GM12878 (cell line): ENCODE measurements at regions of chr6 and their contacts with region 1.

Region 1: DNA sequence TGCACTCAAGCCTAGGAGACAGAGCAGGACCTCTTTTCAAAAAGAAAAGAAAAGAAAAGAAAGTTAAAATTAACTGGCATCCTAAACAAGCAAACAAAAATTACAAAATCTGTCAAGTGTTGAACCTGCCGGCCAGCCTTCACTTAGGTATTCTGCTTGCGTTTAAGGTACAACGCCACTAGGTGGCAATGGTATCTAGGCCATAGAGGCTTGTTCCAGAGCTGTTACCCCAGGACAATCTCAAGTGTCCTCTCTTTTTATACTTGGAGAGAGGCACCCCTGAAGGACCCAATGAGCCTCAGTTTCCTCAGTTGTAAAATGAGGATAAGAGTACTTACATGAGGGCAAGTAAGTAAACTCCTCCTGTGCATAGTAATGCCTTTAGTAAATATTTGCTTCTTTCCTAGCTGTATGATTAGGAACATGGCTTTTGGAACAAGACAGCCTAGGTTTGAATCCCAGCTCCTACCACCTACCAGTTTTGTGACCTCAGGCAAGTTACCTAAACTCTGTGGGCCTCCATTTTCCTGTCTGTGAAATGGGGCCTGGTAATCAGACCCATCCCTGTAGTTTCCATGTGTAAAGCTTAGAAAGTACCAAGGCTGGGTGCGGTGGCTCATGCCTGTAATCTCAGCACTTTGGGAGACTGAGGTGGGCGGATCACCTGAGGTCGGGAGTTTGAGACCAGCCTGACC is 5.8 kb upstream of the PACSIN1 start:
- DNase-seq: peak; percentile 24
- ATAC-seq: peak; percentile 87
- H3K4me3 ChIP-seq: no peak overlapping the region
- H3K27ac ChIP-seq: no peak overlapping the region
- H3K4me1 ChIP-seq: no peaks in the 10 kb centered on the region; the same call in 1 of the 2 replicates
- H3K27me3 ChIP-seq: no peaks in the 10 kb centered on the region
- CTCF ChIP-seq: peak; percentile 69 to 83 (median 77)
- EP300 ChIP-seq: no peak
- POLR2A ChIP-seq: no peak
- RAD21 ChIP-seq: peak; percentile 95

Region 2: DNA sequence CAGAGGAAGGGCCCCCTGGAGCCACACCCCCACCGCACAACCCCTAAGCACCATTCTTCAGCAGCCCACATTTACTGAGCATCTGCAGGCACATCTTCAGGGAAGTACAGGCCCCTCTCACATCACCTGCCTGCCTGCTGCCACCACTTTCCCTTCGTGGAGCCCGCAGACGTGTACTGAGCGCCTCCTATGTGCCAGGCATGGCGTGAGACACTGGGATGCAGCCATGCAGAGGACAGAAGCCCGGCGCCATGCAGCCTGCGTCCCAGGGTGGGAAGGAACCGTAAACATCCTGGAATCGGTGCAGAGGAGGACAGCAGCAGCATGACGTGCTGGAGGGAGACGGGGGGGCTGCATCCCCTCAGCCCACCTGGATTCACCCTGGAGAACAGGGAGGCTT is 392.2 kb before region 1 on chr6:
- CTCF ChIA-PET with region 1: no interaction called
- POLR2A ChIA-PET with region 1: no interaction called
- RAD21 ChIA-PET with region 1: no interaction called
- SMC1A ChIA-PET with region 1: no interaction called
- in situ Hi-C with region 1: no loop called
- intact Hi-C with region 1: no loop called
- DNase-seq: no peak
- ATAC-seq: peak; percentile 61
- H3K4me3 ChIP-seq: no peak overlapping the region
- H3K27ac ChIP-seq: no peak overlapping the region
- H3K4me1 ChIP-seq: no peaks in the 10 kb centered on the region
- H3K27me3 ChIP-seq: peaks cover 0 to 3% of the 10 kb centered on the region in 2 experiments; a peak in 1 of 4 replicates
- CTCF ChIP-seq: peak; percentile 26 to 45 (median 36); a peak in 4 of 6 replicates
- EP300 ChIP-seq: no peak
- POLR2A ChIP-seq: no peak
- RAD21 ChIP-seq: peak; percentile 51

Region 3: DNA sequence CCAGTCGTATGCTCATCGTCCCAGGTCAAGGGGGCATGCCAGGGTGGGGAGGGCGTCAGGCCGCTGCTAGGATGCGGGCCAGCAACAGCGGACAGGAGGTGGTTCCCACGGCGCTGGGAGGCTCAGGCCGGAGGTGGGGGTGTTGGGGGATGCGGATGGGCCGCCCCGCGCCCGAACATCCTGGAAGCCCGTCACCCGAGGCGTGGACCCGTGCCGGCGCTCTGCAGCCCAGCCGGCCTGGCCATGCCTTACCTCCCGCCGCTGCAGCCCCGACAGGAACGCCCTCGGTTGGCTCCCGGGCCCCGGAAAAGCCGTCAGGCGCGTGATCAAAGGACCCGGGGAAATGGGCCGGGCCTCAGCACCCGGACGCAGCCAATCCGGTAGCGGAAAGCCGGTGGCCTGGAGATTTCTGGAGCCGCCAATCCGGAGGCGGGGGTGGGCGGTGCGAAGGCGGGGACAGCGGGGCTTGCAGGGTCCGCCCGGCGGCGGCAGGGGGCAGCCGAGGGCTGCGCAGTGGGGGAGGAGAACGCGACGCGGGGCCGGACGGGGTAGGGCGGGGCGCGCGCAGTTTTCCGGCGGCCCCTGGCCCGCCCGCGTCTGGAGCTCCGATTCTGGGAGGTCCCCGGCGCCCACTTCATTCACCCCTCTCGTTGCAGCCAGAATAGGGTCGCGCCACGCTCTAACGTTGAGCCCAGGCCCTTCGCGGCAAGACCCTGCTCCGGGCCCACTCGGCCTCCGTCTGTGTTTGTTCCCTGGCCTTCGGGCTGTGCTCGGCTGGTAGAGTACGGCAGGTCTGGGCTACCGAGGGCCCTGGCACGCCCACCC is 211.1 kb before region 1 on chr6 and contains the start of gene SMIM29:
- CTCF ChIA-PET with region 1: interaction called, 22 read pairs
- POLR2A ChIA-PET with region 1: interaction called, 3 read pairs
- RAD21 ChIA-PET with region 1: interaction called, 10 read pairs
- SMC1A ChIA-PET with region 1: interaction called, 6 read pairs
- in situ Hi-C with region 1: no loop called
- intact Hi-C with region 1: no loop called
- DNase-seq: peak; percentile 62
- ATAC-seq: peak; percentile 88
- H3K4me3 ChIP-seq: peak within 1 kb of the TSS; percentile 84
- H3K27ac ChIP-seq: peak within 1 kb of the TSS; percentile 78
- H3K4me1 ChIP-seq: peaks cover 19% of the 10 kb centered on the region
- H3K27me3 ChIP-seq: no peaks in the 10 kb centered on the region
- CTCF ChIP-seq: peak; percentile 82 to 86 (median 86)
- EP300 ChIP-seq: no peak
- POLR2A ChIP-seq: peak; percentile 91
- RAD21 ChIP-seq: peak; percentile 81
- polyA plus RNA-seq, gene SMIM29: 7.1 to 8.4 TPM

Region 4: GRCh38 chr6:34295721-34296120 is 164.3 kb before region 1 on chr6:
- CTCF ChIA-PET with region 1: no interaction called
- POLR2A ChIA-PET with region 1: no interaction called
- RAD21 ChIA-PET with region 1: no interaction called
- SMC1A ChIA-PET with region 1: no interaction called
- in situ Hi-C with region 1: no loop called
- intact Hi-C with region 1: no loop called
- DNase-seq: peak; percentile 95
- ATAC-seq: peak; percentile 95
- H3K4me3 ChIP-seq: 0 out of 2 replicates have a peak overlapping the region, but pooled peaks have one; percentile 4
- H3K27ac ChIP-seq: peak overlapping the region; percentile 76
- H3K4me1 ChIP-seq: peaks cover 40% of the 10 kb centered on the region
- H3K27me3 ChIP-seq: no peaks in the 10 kb centered on the region
- CTCF ChIP-seq: no peak
- EP300 ChIP-seq: no peak
- POLR2A ChIP-seq: no peak
- RAD21 ChIP-seq: no peak

Region 5: DNA sequence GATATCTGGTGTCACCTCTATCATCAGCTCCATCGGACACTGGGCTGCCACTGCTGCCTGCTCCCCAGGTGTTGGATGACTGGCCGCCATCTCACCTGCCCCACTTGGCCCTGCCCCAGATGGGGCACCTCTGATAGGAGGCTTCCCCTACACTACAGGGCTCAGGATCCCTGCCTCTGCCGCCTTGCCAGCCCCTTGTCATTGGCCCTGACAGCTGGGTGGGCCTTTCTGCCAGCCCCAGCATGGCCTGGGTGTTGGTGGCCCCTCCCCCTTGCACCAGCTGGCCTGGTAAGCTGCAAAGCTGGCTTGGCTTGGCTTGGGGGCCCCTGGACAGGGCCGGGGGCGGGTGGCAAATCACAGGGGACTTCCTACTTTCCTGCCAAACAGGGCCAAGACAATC is 16.4 kb after region 1 on chr6:
- CTCF ChIA-PET with region 1: interaction called, 9 read pairs
- POLR2A ChIA-PET with region 1: interaction called, 7 read pairs
- RAD21 ChIA-PET with region 1: interaction called, 11 read pairs
- SMC1A ChIA-PET with region 1: interaction called, 11 read pairs
- in situ Hi-C with region 1: no loop called
- intact Hi-C with region 1: no loop called
- DNase-seq: no peak
- ATAC-seq: no peak; the same call in 2 of the 3 replicates
- H3K4me3 ChIP-seq: no peak overlapping the region
- H3K27ac ChIP-seq: no peak overlapping the region
- H3K4me1 ChIP-seq: no peaks in the 10 kb centered on the region
- H3K27me3 ChIP-seq: no peaks in the 10 kb centered on the region
- CTCF ChIP-seq: no peak
- EP300 ChIP-seq: no peak
- POLR2A ChIP-seq: no peak
- RAD21 ChIP-seq: no peak

Region 6: GRCh38 chr6:34595332-34596184 is 135.5 kb after region 1 on chr6:
- CTCF ChIA-PET with region 1: interaction called, 11 read pairs
- POLR2A ChIA-PET with region 1: no interaction called
- RAD21 ChIA-PET with region 1: interaction called, 9 read pairs
- SMC1A ChIA-PET with region 1: interaction called, 20 read pairs
- in situ Hi-C with region 1: no loop called
- intact Hi-C with region 1: no loop called
- DNase-seq: no peak
- ATAC-seq: no peak
- H3K4me3 ChIP-seq: no peak overlapping the region
- H3K27ac ChIP-seq: no peak overlapping the region
- H3K4me1 ChIP-seq: peaks cover 5% of the 10 kb centered on the region
- H3K27me3 ChIP-seq: no peaks in the 10 kb centered on the region
- CTCF ChIP-seq: no peak
- EP300 ChIP-seq: no peak
- POLR2A ChIP-seq: no peak
- RAD21 ChIP-seq: no peak

Region 7: DNA sequence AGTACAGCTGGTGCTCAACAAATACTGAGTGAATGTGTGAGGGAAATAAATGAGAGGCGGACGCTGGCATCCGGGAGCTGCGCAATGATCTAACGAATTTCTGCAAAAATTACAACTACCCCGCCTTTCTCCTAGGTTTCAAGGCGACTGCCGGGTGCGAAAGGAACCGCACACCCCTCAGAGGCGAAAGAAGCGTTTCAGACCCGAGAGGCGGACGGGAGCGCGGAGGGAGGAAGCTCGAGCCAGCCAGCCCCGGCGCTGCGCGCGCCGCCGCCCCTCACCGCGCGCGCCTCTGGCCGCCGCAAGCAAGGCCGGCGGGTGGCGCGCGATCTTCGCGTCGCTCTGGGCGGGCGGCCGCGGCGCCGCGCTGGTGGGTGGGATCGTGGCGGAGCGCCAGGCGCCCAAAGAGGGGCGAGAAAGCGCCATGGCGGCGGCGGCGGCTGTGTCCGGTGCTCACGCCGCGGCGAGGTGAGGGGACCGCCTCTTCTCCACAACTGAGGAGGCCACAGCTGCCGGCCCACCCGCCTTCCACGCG is 331.7 kb after region 1 on chr6 and contains the start of gene BLTP3A:
- CTCF ChIA-PET with region 1: interaction called, 11 read pairs
- POLR2A ChIA-PET with region 1: no interaction called
- RAD21 ChIA-PET with region 1: interaction called, 7 read pairs
- SMC1A ChIA-PET with region 1: no interaction called
- in situ Hi-C with region 1: no loop called
- intact Hi-C with region 1: no loop called
- DNase-seq: no peak
- ATAC-seq: peak; percentile 95
- H3K4me3 ChIP-seq: peak within 1 kb of the TSS; percentile 88
- H3K27ac ChIP-seq: peak within 1 kb of the TSS; percentile 79
- H3K4me1 ChIP-seq: no peaks in the 10 kb centered on the region; the same call in 1 of the 2 replicates
- H3K27me3 ChIP-seq: no peaks in the 10 kb centered on the region
- CTCF ChIP-seq: peak in 1 of 3 experiments; percentile 44; a peak in 1 of 6 replicates
- EP300 ChIP-seq: no peak
- POLR2A ChIP-seq: peak; percentile 89
- RAD21 ChIP-seq: peak; percentile 50
- polyA plus RNA-seq, gene BLTP3A: 2.7 to 2.8 TPM

Region 8: DNA sequence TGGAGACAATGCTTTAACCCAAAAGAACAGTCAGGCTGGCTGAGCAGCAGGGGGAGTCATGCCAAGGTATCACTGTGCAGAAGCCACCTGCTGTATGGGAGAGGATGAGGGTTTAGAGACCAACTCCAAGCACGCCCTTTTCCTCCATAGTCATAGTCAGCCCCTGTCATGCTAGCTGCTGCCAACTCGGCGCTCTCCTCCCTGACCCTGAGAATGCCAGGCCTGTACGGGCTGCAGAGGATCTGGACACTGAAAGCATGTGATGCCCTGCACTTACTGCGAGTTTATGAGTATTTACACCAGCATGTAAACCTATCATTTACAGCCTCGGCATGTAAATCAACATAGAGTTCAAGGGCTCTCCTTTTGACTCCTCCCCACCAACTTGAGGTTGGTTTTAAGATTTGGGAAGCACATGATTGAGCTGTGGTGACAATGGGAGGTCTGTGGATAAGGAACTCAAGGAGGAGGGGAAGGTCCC is 742.1 kb after region 1 on chr6:
- CTCF ChIA-PET with region 1: interaction called, 15 read pairs
- POLR2A ChIA-PET with region 1: no interaction called
- RAD21 ChIA-PET with region 1: interaction called, 6 read pairs
- SMC1A ChIA-PET with region 1: interaction called, 3 read pairs
- in situ Hi-C with region 1: no loop called
- intact Hi-C with region 1: no loop called
- DNase-seq: no peak
- ATAC-seq: 0 out of 3 replicates have a peak, but pooled peaks have one; percentile 17
- H3K4me3 ChIP-seq: no peak overlapping the region
- H3K27ac ChIP-seq: no peak overlapping the region
- H3K4me1 ChIP-seq: no peaks in the 10 kb centered on the region
- H3K27me3 ChIP-seq: no peaks in the 10 kb centered on the region; a peak in 4 of 4 replicates
- CTCF ChIP-seq: no peak
- EP300 ChIP-seq: no peak
- POLR2A ChIP-seq: no peak
- RAD21 ChIP-seq: no peak